ENCODE measurements at regions of chr1 and their contacts with region 1.

Region 1: GRCh38 chr1:87386217-87386790 is 57.6 kb downstream of the LMO4 start:
- DNase-seq: no peak
- ATAC-seq: no peak
- H3K4me3 Mint-ChIP-seq: no peak overlapping the region
- H3K27ac Mint-ChIP-seq: no peak overlapping the region
- H3K4me1 Mint-ChIP-seq: no peaks in the 10 kb centered on the region
- H3K27me3 Mint-ChIP-seq: no peaks in the 10 kb centered on the region
- CTCF ChIP-seq: no peak

Region 2: DNA sequence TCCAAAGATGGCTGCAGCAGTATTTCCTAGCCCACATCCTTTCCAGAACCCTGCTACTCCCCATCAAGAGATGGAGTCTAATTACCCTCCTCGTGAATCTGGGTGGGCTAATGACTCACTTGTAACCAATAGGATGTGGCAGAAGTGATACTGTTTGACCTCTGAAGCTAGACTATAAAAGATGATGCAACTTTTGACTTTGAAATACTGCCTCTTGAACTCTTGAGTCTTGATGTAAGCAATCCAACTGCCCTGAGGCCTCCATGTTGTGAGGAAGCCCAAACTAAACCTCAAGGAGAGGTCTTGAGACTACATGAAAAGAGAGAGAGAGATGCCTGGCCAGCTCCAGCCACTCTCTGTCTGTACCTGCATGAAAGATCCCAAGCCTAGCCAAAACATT is 28.1 kb before region 1 on chr1:
- CTCF ChIA-PET with region 1: no interaction called
- POLR2A ChIA-PET with region 1: no interaction called
- intact Hi-C with region 1: loop called (anchors 5 kb)
- DNase-seq: no peak
- ATAC-seq: no peak
- H3K4me3 Mint-ChIP-seq: no peak overlapping the region
- H3K27ac Mint-ChIP-seq: no peak overlapping the region
- H3K4me1 Mint-ChIP-seq: no peaks in the 10 kb centered on the region
- H3K27me3 Mint-ChIP-seq: no peaks in the 10 kb centered on the region
- CTCF ChIP-seq: no peak